CD8-positive, alpha-beta T cell (primary cell): ENCODE measurements at regions of chr19 and their contacts with region 1.

Region 1: DNA sequence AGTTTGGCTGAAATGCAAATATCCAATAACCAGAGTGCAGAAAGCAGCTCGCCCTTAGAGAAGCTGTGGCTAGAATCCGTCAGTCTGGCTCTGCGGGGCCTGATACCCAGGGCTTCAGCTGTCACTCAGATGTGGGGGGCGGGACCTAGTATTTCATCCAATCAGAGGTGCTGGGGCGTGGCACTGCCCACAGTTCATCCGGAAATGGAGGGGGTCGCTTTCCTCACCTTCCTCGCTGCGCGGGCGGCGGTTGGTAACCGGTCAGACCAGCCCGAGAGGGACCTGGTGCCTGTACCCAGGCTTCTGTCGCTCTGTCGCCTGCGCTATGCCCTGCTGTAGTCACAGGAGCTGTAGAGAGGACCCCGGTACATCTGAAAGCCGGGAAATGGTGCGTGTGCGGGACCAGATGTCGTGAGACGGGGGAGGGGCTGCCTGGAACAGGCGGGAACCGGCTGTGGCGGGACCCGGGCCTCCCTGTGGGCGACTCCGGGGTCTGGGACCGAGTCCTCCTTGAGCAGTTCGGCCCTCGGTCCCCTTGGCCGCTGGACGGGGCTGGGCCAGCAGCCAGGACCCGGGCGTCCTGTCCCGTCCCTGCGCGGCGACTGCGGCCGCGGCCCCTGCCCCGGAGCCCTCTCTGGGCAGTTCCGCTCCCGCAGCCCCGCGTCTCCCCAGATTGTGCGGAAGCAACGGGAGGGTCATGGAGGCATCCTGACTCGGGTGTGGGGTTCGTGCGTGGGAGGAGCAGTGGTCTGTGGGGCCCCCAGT is at the start of gene ZNF700:
- DNase-seq: peak; percentile 83 to 95 (median 92)
- ATAC-seq: peak; percentile 86
- H3K4me3 ChIP-seq: peak within 1 kb of the TSS; percentile 82 to 96
- H3K4me3 Mint-ChIP-seq: peak within 1 kb of the TSS; percentile 94
- H3K27ac ChIP-seq: peak within 1 kb of the TSS; percentile 85 to 86
- H3K27ac Mint-ChIP-seq: peak within 1 kb of the TSS; percentile 97
- H3K4me1 ChIP-seq: peaks cover 24% of the 10 kb centered on the region
- H3K4me1 Mint-ChIP-seq: peaks cover 53% of the 10 kb centered on the region
- H3K27me3 ChIP-seq: no peaks in the 10 kb centered on the region
- H3K27me3 Mint-ChIP-seq: no peaks in the 10 kb centered on the region
- CTCF ChIP-seq: no peak
- total RNA-seq, gene ZNF700: 10.8 to 10.9 TPM

Region 2: DNA sequence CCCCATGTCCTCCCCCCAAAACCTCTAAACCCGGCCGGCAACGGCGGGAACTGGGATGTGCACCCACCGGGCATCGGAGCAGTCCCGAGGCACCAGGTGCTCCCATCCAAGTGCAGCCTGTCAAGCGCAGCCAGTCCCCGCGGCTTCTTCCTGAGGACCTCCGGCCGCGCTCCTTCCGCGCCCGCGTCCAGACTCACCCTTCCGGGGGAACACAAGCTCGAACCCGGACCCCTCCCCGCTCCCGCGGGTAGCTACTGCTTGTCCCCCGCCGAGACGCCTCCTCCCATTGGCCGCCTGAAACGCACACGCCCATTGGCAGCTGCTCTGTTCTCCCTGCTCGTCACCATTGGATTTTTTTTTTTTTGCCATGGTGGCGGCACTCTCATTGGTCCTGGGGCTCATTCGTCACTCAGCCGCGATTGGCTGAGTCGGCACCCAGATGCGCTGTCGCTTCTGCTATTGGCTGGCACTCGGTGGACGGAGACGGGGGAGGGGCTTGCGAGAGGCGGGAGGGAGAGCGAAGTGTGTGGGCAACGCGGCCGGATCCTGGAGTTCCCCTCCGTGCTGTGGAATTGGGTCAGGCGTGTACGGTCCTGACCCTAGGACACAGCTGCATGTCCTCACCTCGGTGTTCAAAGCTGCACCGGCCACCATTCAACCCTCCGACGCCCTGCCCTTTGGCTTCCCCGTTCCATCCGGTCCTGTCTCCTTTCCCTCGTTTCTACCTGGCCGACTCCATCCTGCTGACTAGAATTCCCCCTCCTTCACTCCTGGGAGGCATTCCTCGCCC is 1544.6 kb before region 1 on chr19 and contains the start of gene TYK2:
- CTCF ChIA-PET with region 1: no interaction called
- POLR2A ChIA-PET with region 1: no interaction called
- intact Hi-C with region 1: no loop called
- DNase-seq: peak; percentile 91 to 99 (median 96)
- ATAC-seq: peak; percentile 98
- H3K4me3 ChIP-seq: peak within 1 kb of the TSS; percentile 73 to 84
- H3K4me3 Mint-ChIP-seq: peak within 1 kb of the TSS; percentile 96
- H3K27ac ChIP-seq: peak within 1 kb of the TSS; percentile 76 to 88
- H3K27ac Mint-ChIP-seq: peak within 1 kb of the TSS; percentile 96
- H3K4me1 ChIP-seq: peaks cover 9% of the 10 kb centered on the region
- H3K4me1 Mint-ChIP-seq: peaks cover 22% of the 10 kb centered on the region
- H3K27me3 ChIP-seq: no peaks in the 10 kb centered on the region
- H3K27me3 Mint-ChIP-seq: no peaks in the 10 kb centered on the region
- CTCF ChIP-seq: no peak
- total RNA-seq, gene TYK2: 244 to 250 TPM

Region 3: GRCh38 chr19:11587302-11587974 is 337.6 kb before region 1 on chr19:
- CTCF ChIA-PET with region 1: no interaction called
- POLR2A ChIA-PET with region 1: no interaction called
- intact Hi-C with region 1: no loop called
- DNase-seq: peak; percentile 57 to 82 (median 77)
- ATAC-seq: peak; percentile 100
- H3K4me3 ChIP-seq: no peak overlapping the region
- H3K4me3 Mint-ChIP-seq: no peak overlapping the region
- H3K27ac ChIP-seq: no peak overlapping the region
- H3K27ac Mint-ChIP-seq: no peak overlapping the region
- H3K4me1 ChIP-seq: no peaks in the 10 kb centered on the region
- H3K4me1 Mint-ChIP-seq: peaks cover 2% of the 10 kb centered on the region
- H3K27me3 ChIP-seq: no peaks in the 10 kb centered on the region
- H3K27me3 Mint-ChIP-seq: no peaks in the 10 kb centered on the region
- CTCF ChIP-seq: peak; percentile 85

Region 4: GRCh38 chr19:11848594-11849469 is 76.2 kb before region 1 on chr19 and contains the start of gene ZNF439:
- CTCF ChIA-PET with region 1: no interaction called
- POLR2A ChIA-PET with region 1: no interaction called
- intact Hi-C with region 1: loop called in 1 of 2 experiments (anchors 2 kb)
- DNase-seq: peak; percentile 76 to 93 (median 89)
- ATAC-seq: peak; percentile 100
- H3K4me3 ChIP-seq: peak within 1 kb of the TSS; percentile 67 to 78
- H3K4me3 Mint-ChIP-seq: peak within 1 kb of the TSS; percentile 94
- H3K27ac ChIP-seq: peak within 1 kb of the TSS; percentile 55 to 64
- H3K27ac Mint-ChIP-seq: peak within 1 kb of the TSS; percentile 88
- H3K4me1 ChIP-seq: peaks cover 11% of the 10 kb centered on the region
- H3K4me1 Mint-ChIP-seq: peaks cover 24% of the 10 kb centered on the region
- H3K27me3 ChIP-seq: no peaks in the 10 kb centered on the region
- H3K27me3 Mint-ChIP-seq: no peaks in the 10 kb centered on the region
- CTCF ChIP-seq: no peak
- total RNA-seq, gene ZNF439: 6.2 to 7.9 TPM

Region 5: DNA sequence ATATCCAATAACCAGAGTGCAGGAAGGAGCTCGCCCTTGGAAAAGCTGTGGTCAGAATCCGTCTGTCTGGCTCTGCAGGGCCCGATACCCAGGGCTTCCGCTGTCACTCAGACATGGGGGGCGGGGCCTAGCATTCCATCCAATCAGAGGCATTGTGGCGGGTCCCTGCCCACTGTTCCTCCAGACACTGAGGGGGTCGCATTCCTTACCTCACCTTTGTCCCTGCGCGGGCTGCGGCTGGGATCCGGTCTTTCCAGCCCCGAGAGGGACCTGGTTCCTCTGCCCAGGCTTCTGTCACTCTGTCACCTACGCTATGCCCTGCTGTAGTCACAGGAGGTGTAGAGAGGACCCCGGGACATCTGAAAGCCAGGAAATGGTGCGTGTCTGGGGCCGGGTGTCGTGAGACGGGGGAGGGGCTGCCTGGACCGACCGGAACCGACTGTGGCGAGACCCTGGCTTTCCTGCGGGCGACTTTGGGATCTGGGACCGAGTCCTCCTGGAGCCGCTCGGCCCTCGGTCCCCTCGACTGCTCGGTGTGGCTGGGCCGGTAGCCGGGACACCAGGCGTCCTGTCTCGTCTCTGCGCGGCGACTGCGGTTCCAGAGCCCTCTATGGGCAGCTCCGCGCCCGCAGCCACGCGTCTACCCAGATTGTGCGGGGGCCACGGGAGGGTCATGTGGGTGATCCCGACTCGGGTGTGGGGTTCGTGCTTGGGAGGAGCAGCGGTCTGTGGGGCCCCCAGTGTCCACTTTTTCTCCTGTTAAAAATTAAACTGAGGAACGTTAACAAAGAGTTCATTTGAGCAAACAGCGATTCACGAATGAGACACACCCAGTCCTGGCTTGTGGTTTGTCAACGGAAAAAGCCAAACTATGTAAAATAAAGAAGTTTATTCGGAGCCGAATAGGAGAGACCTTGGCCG is 37.2 kb before region 1 on chr19 and contains the start of gene ZNF69:
- CTCF ChIA-PET with region 1: interaction called, 55 read pairs
- POLR2A ChIA-PET with region 1: interaction called, 5 read pairs
- intact Hi-C with region 1: loop called (anchors 2 to 5 kb)
- DNase-seq: peak; percentile 16 to 83 (median 67)
- ATAC-seq: peak; percentile 89
- H3K4me3 ChIP-seq: peak within 1 kb of the TSS; percentile 63 to 80
- H3K4me3 Mint-ChIP-seq: peak within 1 kb of the TSS; percentile 93
- H3K27ac ChIP-seq: peak within 1 kb of the TSS; percentile 46 to 48
- H3K27ac Mint-ChIP-seq: peak within 1 kb of the TSS; percentile 91
- H3K4me1 ChIP-seq: peaks cover 12% of the 10 kb centered on the region
- H3K4me1 Mint-ChIP-seq: peaks cover 36% of the 10 kb centered on the region
- H3K27me3 ChIP-seq: no peaks in the 10 kb centered on the region
- H3K27me3 Mint-ChIP-seq: no peaks in the 10 kb centered on the region
- CTCF ChIP-seq: no peak
- total RNA-seq, gene ZNF69: 1.7 to 2.0 TPM

Region 6: GRCh38 chr19:11964858-11965645 is 40.0 kb after region 1 on chr19 and contains the start of gene ZNF763:
- CTCF ChIA-PET with region 1: interaction called, 55 read pairs
- POLR2A ChIA-PET with region 1: interaction called, 20 read pairs
- intact Hi-C with region 1: loop called (anchors 1 kb)
- DNase-seq: peak; percentile 73 to 93 (median 89)
- ATAC-seq: peak; percentile 93
- H3K4me3 ChIP-seq: peak within 1 kb of the TSS; percentile 69 to 93
- H3K4me3 Mint-ChIP-seq: peak within 1 kb of the TSS; percentile 97
- H3K27ac ChIP-seq: peak within 1 kb of the TSS; percentile 80 to 96
- H3K27ac Mint-ChIP-seq: peak within 1 kb of the TSS; percentile 98
- H3K4me1 ChIP-seq: peaks cover 13% of the 10 kb centered on the region
- H3K4me1 Mint-ChIP-seq: peaks cover 30% of the 10 kb centered on the region
- H3K27me3 ChIP-seq: no peaks in the 10 kb centered on the region
- H3K27me3 Mint-ChIP-seq: no peaks in the 10 kb centered on the region
- CTCF ChIP-seq: no peak
- total RNA-seq, gene ZNF763: 1.5 to 1.8 TPM

Region 7: GRCh38 chr19:12052497-12053169 is 127.6 kb after region 1 on chr19 and contains the start of gene ZNF878:
- CTCF ChIA-PET with region 1: interaction called, 13 read pairs
- POLR2A ChIA-PET with region 1: no interaction called
- intact Hi-C with region 1: loop called (anchors 1 to 2 kb)
- DNase-seq: peak in 8 of 9 experiments; percentile 19 to 65 (median 42)
- ATAC-seq: peak; percentile 72
- H3K4me3 ChIP-seq: peak within 1 kb of the TSS; percentile 59 to 75
- H3K4me3 Mint-ChIP-seq: peak within 1 kb of the TSS; percentile 84
- H3K27ac ChIP-seq: no peak within 1 kb of the TSS
- H3K27ac Mint-ChIP-seq: peak within 1 kb of the TSS; percentile 37
- H3K4me1 ChIP-seq: peaks cover 10% of the 10 kb centered on the region
- H3K4me1 Mint-ChIP-seq: peaks cover 15% of the 10 kb centered on the region
- H3K27me3 ChIP-seq: no peaks in the 10 kb centered on the region
- H3K27me3 Mint-ChIP-seq: peaks cover 12% of the 10 kb centered on the region
- CTCF ChIP-seq: no peak
- total RNA-seq, gene ZNF878: not detected